Gastrocnemius medialis (tissue), 4 donors: ENCODE measurements at regions of chr11 and their contacts with region 1.

Region 1: GRCh38 chr11:76799066-76799804 is 16.1 kb downstream of the TSKU start:
- DNase-seq: peak; percentile 61 to 73
- ATAC-seq: peak; percentile 72 to 79
- H3K4me3 ChIP-seq: peak overlapping the region; percentile 29 to 46 (median 38)
- H3K27ac ChIP-seq: peak overlapping the region in 1 of 4 donors; percentile 20
- H3K4me1 ChIP-seq: peaks cover 11 to 12% of the 10 kb centered on the region in 2 donors
- H3K27me3 ChIP-seq: no peaks in the 10 kb centered on the region
- CTCF ChIP-seq: peak; percentile 76 to 95 (median 88)
- POLR2A ChIP-seq: no peak

Region 2: GRCh38 chr11:76734456-76735420 is 64.5 kb before region 1 on chr11:
- in situ Hi-C with region 1: loop called in 2 of 4 experiments (anchors 5 to 10 kb)
- intact Hi-C with region 1: loop called (anchors 1 kb)
- DNase-seq: no peak
- ATAC-seq: no peak
- H3K4me3 ChIP-seq: no peak overlapping the region
- H3K27ac ChIP-seq: no peak overlapping the region
- H3K4me1 ChIP-seq: no peaks in the 10 kb centered on the region
- H3K27me3 ChIP-seq: no peaks in the 10 kb centered on the region
- CTCF ChIP-seq: no peak
- POLR2A ChIP-seq: no peak

Region 3: GRCh38 chr11:76744186-76745043 is 54.8 kb before region 1 on chr11:
- in situ Hi-C with region 1: loop called in 3 of 4 experiments (anchors 5 to 10 kb)
- intact Hi-C with region 1: no loop called
- DNase-seq: peak in 1 of 2 donors; percentile 48
- ATAC-seq: peak in 1 of 2 donors; percentile 51
- H3K4me3 ChIP-seq: no peak overlapping the region
- H3K27ac ChIP-seq: no peak overlapping the region
- H3K4me1 ChIP-seq: no peaks in the 10 kb centered on the region
- H3K27me3 ChIP-seq: no peaks in the 10 kb centered on the region
- CTCF ChIP-seq: no peak
- POLR2A ChIP-seq: no peak